Calu3 (cell line): ENCODE measurements at regions of chr7 and their contacts with region 1.

Region 1: DNA sequence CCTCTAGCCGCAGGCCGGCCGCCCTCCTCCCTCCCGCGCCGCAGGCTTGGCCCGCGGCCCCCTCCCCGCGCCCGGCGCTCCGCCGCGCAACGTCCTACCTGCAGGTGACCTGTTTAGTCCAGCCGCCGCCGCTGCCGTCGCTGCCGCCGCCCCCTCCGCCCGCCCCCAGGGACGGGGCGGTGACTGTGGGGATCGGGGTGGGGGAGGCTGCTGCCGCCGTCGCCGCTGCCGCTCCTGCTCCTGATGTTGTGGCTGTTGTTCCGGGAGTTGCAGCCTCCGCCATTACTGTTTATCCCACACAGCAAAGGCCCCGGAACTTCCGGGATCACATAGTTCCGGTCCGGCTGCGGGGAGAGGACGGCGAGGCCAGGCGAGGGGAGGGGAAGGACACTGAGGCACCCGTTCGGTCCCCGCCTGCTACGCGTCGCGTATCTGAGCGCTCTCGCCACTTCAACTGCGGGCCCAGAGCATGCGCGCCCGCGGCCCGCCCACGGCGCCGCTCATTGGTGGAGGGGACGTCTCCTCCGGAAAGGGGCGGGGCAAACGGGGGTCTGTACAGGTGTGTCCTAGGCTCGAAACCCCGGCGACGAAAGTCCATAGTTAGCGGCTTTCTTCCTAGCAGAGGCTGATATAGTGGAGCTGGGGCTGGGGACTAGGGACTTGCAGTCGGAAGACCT is at the start of gene MKRN1:
- DNase-seq: peak; percentile 97
- H3K4me3 Mint-ChIP-seq: peak within 1 kb of the TSS; percentile 77
- H3K27ac Mint-ChIP-seq: peak within 1 kb of the TSS; percentile 84
- H3K4me1 Mint-ChIP-seq: no peaks in the 10 kb centered on the region
- H3K27me3 Mint-ChIP-seq: no peaks in the 10 kb centered on the region
- CTCF ChIP-seq: no peak
- total RNA-seq, gene MKRN1: 83.9 and 85.3 TPM in 2 replicates

Region 2: DNA sequence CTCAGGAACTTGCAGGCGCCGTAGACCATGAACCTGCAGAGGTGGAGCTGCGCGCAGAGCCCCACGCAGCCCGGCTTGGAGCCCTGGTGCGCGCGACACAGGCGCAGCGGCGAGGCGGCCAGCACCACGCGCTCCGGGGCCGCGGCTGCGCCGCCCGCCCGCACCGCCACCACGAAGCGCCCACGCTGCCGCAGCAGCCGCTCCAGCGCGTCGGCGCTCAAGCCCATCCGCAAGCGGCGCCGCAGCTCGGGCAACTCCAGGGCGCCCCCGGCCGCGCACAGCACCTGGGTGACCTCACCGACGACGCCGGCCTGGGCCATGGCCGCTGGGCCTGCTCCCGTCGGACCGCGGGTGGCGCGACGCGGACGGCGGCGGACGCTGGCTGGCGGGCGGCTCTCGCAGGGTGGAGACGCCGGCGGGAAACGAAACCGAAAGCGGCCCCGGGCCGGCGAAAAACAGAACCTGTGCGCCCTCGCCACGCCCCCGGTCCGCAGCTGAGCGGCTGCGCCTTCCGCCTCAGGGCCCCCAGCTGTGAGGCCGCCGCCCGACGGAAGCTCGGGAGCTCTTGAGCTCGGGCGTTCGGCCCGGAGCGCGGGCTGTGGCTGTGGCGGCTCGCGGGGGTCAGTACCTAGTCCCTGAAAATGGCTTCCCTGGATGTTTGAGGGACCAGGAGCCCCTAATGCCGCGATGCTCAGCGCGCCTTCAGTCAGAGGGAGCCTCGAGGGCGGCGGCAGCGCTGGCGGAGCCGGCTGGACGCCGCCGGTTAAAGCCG is 416.5 kb before region 1 on chr7 and contains the start of gene PARP12:
- CTCF ChIA-PET with region 1: no interaction called
- intact Hi-C with region 1: loop called (anchors 5 kb)
- DNase-seq: peak; percentile 92
- H3K4me3 Mint-ChIP-seq: peak within 1 kb of the TSS; percentile 55
- H3K27ac Mint-ChIP-seq: peak within 1 kb of the TSS; percentile 55
- H3K4me1 Mint-ChIP-seq: peaks cover 37% of the 10 kb centered on the region
- H3K27me3 Mint-ChIP-seq: no peaks in the 10 kb centered on the region
- CTCF ChIP-seq: no peak
- total RNA-seq, gene PARP12: 66.6 and 102 TPM in 2 replicates

Region 3: GRCh38 chr7:140175221-140176121 is 303.7 kb before region 1 on chr7:
- CTCF ChIA-PET with region 1: no interaction called
- intact Hi-C with region 1: loop called (anchors 10 kb)
- DNase-seq: peak; percentile 79
- H3K4me3 Mint-ChIP-seq: peak overlapping the region; percentile 75
- H3K27ac Mint-ChIP-seq: no peak overlapping the region
- H3K4me1 Mint-ChIP-seq: peaks cover 15% of the 10 kb centered on the region
- H3K27me3 Mint-ChIP-seq: peaks cover 23% of the 10 kb centered on the region
- CTCF ChIP-seq: peak; percentile 44

Region 4: GRCh38 chr7:140494867-140495266 is 15.7 kb after region 1 on chr7:
- CTCF ChIA-PET with region 1: no interaction called
- intact Hi-C with region 1: loop called (anchors 1 kb)
- DNase-seq: no peak
- H3K4me3 Mint-ChIP-seq: no peak overlapping the region
- H3K27ac Mint-ChIP-seq: no peak overlapping the region
- H3K4me1 Mint-ChIP-seq: no peaks in the 10 kb centered on the region
- H3K27me3 Mint-ChIP-seq: no peaks in the 10 kb centered on the region
- CTCF ChIP-seq: no peak

Region 5: DNA sequence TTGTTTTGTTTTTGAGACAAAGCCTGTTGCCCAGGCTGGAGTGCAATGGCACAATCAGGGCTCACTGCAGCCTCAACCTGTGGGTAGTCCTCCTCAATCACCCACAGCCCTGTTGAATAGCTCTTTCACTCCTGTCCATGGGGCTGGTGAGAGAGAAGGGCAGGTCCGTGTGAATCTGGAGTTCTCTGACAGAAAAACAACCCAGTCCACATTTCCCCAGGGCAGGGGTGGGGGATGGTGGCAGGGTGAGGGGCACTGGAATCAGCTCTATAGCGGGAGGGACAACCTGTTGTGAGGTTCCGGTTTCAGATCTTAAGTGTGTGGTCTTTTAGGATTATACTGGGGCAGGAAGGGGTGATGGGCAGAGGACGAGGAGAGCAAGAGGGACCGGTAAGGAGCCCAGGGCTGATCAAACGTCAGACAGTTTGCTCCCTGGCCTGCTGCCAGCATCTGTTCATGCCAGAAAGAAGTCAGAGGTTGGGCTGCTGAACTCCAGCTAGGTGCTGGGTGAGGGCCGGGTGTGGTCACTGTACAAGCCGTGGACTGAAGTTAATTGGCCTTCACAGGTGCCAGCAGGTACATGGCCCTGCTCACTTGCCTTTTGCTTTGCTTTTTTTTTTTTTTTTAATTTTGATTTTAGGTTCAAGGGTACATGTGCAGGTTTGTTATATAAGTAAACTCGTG is 33.3 kb after region 1 on chr7:
- CTCF ChIA-PET with region 1: no interaction called
- intact Hi-C with region 1: loop called (anchors 5 kb)
- DNase-seq: peak; percentile 77
- H3K4me3 Mint-ChIP-seq: no peak overlapping the region
- H3K27ac Mint-ChIP-seq: peak overlapping the region; percentile 43
- H3K4me1 Mint-ChIP-seq: peaks cover 8% of the 10 kb centered on the region
- H3K27me3 Mint-ChIP-seq: no peaks in the 10 kb centered on the region
- CTCF ChIP-seq: no peak

Region 6: GRCh38 chr7:140653319-140654108 is 174.3 kb after region 1 on chr7:
- CTCF ChIA-PET with region 1: no interaction called
- intact Hi-C with region 1: loop called (anchors 2 kb)
- DNase-seq: peak; percentile 71
- H3K4me3 Mint-ChIP-seq: no peak overlapping the region
- H3K27ac Mint-ChIP-seq: no peak overlapping the region
- H3K4me1 Mint-ChIP-seq: peaks cover 34% of the 10 kb centered on the region
- H3K27me3 Mint-ChIP-seq: no peaks in the 10 kb centered on the region
- CTCF ChIP-seq: peak; percentile 68